GM23248 (cell line): ENCODE measurements at regions of chr4 and their contacts with region 1.

Region 1: GRCh38 chr4:95165926-95166524 is 382.7 kb downstream of the UNC5C start:
- DNase-seq: peak; percentile 81
- H3K4me3 ChIP-seq: no peak overlapping the region
- H3K27ac ChIP-seq: no peak overlapping the region
- H3K4me1 ChIP-seq: no peaks in the 10 kb centered on the region
- H3K27me3 ChIP-seq: no peaks in the 10 kb centered on the region; the same call in 1 of the 2 replicates

Region 2: GRCh38 chr4:95835672-95836071 is 669.6 kb after region 1 on chr4:
- in situ Hi-C with region 1: loop called (anchors 25 kb)
- DNase-seq: no peak
- H3K4me3 ChIP-seq: no peak overlapping the region
- H3K27ac ChIP-seq: no peak overlapping the region
- H3K4me1 ChIP-seq: no peaks in the 10 kb centered on the region
- H3K27me3 ChIP-seq: no peaks in the 10 kb centered on the region